ENCODE measurements at regions of chr12 and their contacts with region 1.

Region 1: GRCh38 chr12:110501752-110502738 is at the starts of genes RAD9B and VPS29:
- DNase-seq: peak; percentile 98
- H3K4me3 Mint-ChIP-seq: peak within 1 kb of the TSS; percentile 92
- H3K27ac Mint-ChIP-seq: peak within 1 kb of the TSS; percentile 96
- H3K4me1 Mint-ChIP-seq: peaks cover 14% of the 10 kb centered on the region
- H3K27me3 Mint-ChIP-seq: no peaks in the 10 kb centered on the region
- CTCF ChIP-seq: no peak
- total RNA-seq, gene RAD9B: 1.0 and 1.5 TPM in 2 replicates
- total RNA-seq, gene VPS29: 125 and 131 TPM in 2 replicates

Region 2: DNA sequence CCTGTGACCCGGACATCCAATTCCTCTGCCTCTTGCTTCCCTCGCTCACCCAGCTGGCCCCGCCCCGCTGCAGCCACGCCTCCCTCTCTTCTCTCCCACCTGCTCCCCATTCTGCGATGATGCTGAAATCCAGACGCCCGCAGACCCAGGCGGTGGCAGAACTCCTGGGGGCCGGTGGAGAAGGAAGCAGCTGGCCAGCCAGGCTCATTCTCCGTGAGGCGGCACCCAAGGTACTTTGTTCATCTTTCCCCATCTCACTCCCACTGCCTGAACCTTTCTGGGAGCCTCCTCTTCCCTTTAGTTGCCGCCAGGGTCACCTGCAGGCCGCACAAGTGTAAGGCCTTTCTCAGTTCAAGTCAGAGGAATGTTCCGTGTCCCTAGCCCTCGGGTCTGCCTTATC is 1228.7 kb before region 1 on chr12:
- CTCF ChIA-PET with region 1: no interaction called
- POLR2A ChIA-PET with region 1: no interaction called
- intact Hi-C with region 1: no loop called
- DNase-seq: no peak
- H3K4me3 Mint-ChIP-seq: no peak overlapping the region
- H3K27ac Mint-ChIP-seq: no peak overlapping the region
- H3K4me1 Mint-ChIP-seq: peaks cover 5% of the 10 kb centered on the region
- H3K27me3 Mint-ChIP-seq: peaks cover 12% of the 10 kb centered on the region
- CTCF ChIP-seq: no peak

Region 3: GRCh38 chr12:110468212-110469048 is 33.6 kb before region 1 on chr12 and contains the starts of genes FAM216A and GPN3:
- CTCF ChIA-PET with region 1: interaction called, 7 read pairs
- POLR2A ChIA-PET with region 1: interaction called, 117 read pairs
- intact Hi-C with region 1: loop called (anchors 1 kb)
- DNase-seq: peak; percentile 99
- H3K4me3 Mint-ChIP-seq: peak within 1 kb of the TSS; percentile 88
- H3K27ac Mint-ChIP-seq: peak within 1 kb of the TSS; percentile 93
- H3K4me1 Mint-ChIP-seq: peaks cover 11% of the 10 kb centered on the region
- H3K27me3 Mint-ChIP-seq: no peaks in the 10 kb centered on the region
- CTCF ChIP-seq: no peak
- total RNA-seq, gene FAM216A: 19.9 and 25.8 TPM in 2 replicates
- total RNA-seq, gene GPN3: 16.1 and 18.1 TPM in 2 replicates

Region 4: DNA sequence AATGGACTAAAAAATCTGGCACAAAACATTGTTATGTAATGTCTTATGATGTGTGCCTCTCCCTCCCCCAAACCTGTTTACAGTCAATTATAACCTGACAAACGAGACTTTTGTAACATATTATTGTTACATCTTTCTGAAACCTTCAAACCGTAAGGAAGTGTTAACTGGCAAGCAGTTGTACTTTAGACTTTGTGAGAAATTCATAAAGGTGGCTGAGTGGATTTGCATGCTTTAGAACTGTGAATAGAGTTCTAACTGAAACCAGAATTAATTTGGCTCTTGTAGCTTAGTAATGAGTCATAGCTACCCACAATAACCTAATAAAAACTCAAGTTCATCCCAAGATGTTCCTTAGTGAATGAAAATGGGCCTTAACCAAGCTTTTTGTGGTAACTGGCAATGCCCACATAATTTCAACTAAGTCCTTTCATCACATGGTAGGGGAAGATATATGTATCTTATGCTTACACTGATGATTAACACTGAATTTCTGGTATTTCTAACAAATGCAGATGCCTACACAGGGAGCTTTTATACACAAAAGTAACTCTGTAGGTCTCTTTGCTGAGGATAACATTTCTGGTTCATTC is 29.8 kb after region 1 on chr12:
- CTCF ChIA-PET with region 1: interaction called, 3 read pairs
- POLR2A ChIA-PET with region 1: interaction called, 34 read pairs
- intact Hi-C with region 1: no loop called
- DNase-seq: peak; percentile 73
- H3K4me3 Mint-ChIP-seq: no peak overlapping the region
- H3K27ac Mint-ChIP-seq: peak overlapping the region; percentile 42
- H3K4me1 Mint-ChIP-seq: peaks cover 18% of the 10 kb centered on the region
- H3K27me3 Mint-ChIP-seq: no peaks in the 10 kb centered on the region
- CTCF ChIP-seq: no peak

Region 5: DNA sequence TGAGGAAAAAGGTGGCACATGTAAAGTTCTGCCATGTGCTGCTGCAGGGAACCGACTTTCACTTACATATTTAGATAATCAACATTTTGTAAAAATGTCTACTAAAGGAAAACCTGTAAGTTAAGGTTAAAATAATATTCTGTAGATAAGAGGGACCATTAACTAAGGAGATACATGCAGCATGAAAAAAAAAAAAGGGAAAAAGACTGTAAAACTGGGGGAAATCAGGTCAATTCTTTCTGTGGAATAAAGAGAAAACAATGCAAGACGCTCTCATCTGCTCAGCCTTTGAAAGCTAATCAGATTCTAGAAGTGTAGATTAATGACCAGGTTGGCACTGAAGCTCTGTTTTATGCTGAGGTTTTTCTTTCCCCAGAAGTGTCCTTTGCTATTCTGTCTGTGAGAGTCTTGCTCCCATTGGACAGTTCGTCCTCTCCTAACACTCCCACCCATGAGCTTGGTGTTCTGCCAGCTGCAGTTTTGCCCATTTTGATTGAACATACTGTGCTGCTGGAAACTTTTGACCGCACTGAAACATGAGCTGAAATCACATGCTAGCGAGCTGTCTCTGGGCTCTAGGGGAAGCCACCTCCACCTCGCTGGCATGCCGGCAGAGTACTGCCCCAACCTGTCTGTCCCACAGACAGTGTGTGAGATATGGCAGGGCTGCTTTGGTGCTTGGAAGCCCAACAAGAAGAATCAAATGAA is 41.4 kb after region 1 on chr12:
- CTCF ChIA-PET with region 1: no interaction called
- POLR2A ChIA-PET with region 1: interaction called, 17 read pairs
- intact Hi-C with region 1: no loop called
- DNase-seq: peak; percentile 100
- H3K4me3 Mint-ChIP-seq: peak overlapping the region; percentile 60
- H3K27ac Mint-ChIP-seq: peak overlapping the region; percentile 90
- H3K4me1 Mint-ChIP-seq: peaks cover 54% of the 10 kb centered on the region
- H3K27me3 Mint-ChIP-seq: no peaks in the 10 kb centered on the region
- CTCF ChIP-seq: no peak

Region 6: GRCh38 chr12:110583137-110584059 is 81.4 kb after region 1 on chr12 and contains the start of gene PPTC7:
- CTCF ChIA-PET with region 1: interaction called, 3 read pairs
- POLR2A ChIA-PET with region 1: interaction called, 52 read pairs
- intact Hi-C with region 1: no loop called
- DNase-seq: peak; percentile 97
- H3K4me3 Mint-ChIP-seq: peak within 1 kb of the TSS; percentile 96
- H3K27ac Mint-ChIP-seq: peak within 1 kb of the TSS; percentile 81
- H3K4me1 Mint-ChIP-seq: peaks cover 10% of the 10 kb centered on the region
- H3K27me3 Mint-ChIP-seq: no peaks in the 10 kb centered on the region
- CTCF ChIP-seq: no peak
- total RNA-seq, gene PPTC7: 32.0 and 36.5 TPM in 2 replicates

Region 7: DNA sequence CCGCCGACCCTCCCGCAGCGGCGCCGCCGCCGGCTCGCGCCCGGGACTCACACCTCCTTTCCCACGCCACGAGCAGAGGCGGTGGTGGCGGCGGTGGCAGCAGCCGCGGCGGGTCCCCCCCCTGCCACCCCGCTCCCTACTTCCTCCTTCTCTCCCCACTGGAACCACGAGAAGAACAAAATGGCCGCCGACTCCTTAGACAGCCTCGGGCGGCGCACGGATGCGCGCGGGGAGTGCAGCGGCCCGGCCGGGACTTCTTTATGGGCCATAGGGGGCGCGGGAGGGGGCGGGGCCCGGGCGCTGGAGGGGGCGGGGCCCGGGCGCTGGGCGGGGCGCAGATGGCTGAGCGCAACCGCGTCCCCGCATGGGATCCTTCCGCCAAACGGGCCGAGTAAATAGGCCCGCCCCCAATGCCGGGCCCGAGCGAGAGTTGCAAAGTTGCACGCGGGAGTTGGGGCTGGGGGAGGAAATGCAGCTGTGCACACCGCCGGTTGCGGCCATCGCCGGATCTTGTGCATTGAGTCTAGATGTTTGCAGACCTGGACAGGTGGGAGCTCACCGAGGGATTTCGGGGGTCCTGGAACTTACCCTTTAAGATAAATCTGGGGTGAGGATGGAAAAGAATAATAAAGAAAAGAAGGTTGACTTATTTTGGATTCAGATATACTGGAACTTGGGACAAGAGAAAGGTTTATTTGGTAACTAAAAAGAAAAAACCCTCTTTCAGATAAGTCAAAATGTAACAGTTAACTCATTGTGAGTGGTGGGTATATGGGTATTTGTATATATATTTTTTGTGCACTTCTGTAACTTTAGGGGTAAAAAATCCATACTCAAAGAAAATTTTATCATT is 240.9 kb after region 1 on chr12 and contains the start of gene PPP1CC:
- CTCF ChIA-PET with region 1: interaction called, 3 read pairs
- POLR2A ChIA-PET with region 1: no interaction called
- intact Hi-C with region 1: loop called (anchors 5 kb)
- DNase-seq: peak; percentile 95
- H3K4me3 Mint-ChIP-seq: peak within 1 kb of the TSS; percentile 96
- H3K27ac Mint-ChIP-seq: peak within 1 kb of the TSS; percentile 75
- H3K4me1 Mint-ChIP-seq: peaks cover 39% of the 10 kb centered on the region
- H3K27me3 Mint-ChIP-seq: no peaks in the 10 kb centered on the region
- CTCF ChIP-seq: no peak
- total RNA-seq, gene PPP1CC: 79.4 and 94.6 TPM in 2 replicates

Measured in MCF 10A (cell line).